ENCODE measurements at regions of chr20 and their contacts with region 1.

Region 1: GRCh38 chr20:50713657-50714101 is 17.7 kb upstream of the PARD6B start:
- DNase-seq: peak; percentile 35
- ATAC-seq: peak; percentile 73
- H3K4me3 Mint-ChIP-seq: no peak overlapping the region
- H3K27ac Mint-ChIP-seq: peak overlapping the region; percentile 55; the same call in 1 of the 2 replicates
- H3K4me1 Mint-ChIP-seq: peaks cover 37% of the 10 kb centered on the region
- H3K27me3 Mint-ChIP-seq: no peaks in the 10 kb centered on the region; the same call in none of the 2 replicates
- CTCF ChIP-seq: no peak

Region 2: GRCh38 chr20:50292324-50293243 is 421.1 kb before region 1 on chr20:
- CTCF ChIA-PET with region 1: no interaction called
- POLR2A ChIA-PET with region 1: no interaction called
- DNase-seq: peak; percentile 30
- ATAC-seq: no peak; the same call in 1 of the 2 replicates
- H3K4me3 Mint-ChIP-seq: no peak overlapping the region
- H3K27ac Mint-ChIP-seq: no peak overlapping the region
- H3K4me1 Mint-ChIP-seq: no peaks in the 10 kb centered on the region
- H3K27me3 Mint-ChIP-seq: no peaks in the 10 kb centered on the region
- CTCF ChIP-seq: no peak

Region 3: GRCh38 chr20:50635667-50636503 is 77.8 kb before region 1 on chr20:
- CTCF ChIA-PET with region 1: interaction called, 25 read pairs
- POLR2A ChIA-PET with region 1: no interaction called
- DNase-seq: peak; percentile 93
- ATAC-seq: peak; percentile 78
- H3K4me3 Mint-ChIP-seq: peak overlapping the region; percentile 42
- H3K27ac Mint-ChIP-seq: peak overlapping the region; percentile 86
- H3K4me1 Mint-ChIP-seq: peaks cover 53% of the 10 kb centered on the region
- H3K27me3 Mint-ChIP-seq: no peaks in the 10 kb centered on the region
- CTCF ChIP-seq: peak; percentile 88

Region 4: DNA sequence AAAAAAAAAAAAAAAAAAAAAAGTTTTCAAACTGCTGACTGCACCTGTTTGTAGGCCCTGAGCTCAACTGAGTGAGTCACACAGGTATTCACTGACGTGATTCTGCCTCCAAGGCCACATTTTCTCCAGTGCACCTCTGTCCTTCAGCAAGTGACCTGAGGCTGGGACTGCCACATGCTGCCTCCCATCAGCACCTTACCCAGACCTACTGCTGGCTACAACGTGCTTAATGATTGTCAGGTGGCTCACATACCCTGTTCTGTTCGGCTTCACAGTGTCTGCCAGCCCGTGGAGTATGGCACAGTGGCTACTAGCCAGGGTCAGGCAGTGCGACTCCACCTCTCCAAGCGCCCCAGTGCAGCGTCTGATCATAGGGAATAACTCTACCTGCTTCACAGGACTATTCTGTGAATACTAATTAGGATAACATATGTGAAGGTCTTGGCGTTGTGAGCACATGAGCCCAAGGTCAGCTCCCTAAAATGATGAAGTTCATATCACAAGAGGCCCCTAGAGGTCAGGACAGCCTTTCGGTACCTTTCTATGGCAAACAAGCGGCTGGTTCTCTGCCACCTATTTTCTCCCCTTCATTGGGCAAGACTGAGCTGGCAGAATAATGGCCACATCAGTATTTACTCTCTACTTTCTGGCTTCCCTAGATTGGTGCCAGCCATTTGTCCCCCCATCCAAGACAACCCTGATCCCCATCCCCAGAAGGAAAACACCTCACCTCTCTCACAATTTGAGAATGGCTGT is 50.4 kb before region 1 on chr20:
- CTCF ChIA-PET with region 1: interaction called, 60 read pairs
- POLR2A ChIA-PET with region 1: no interaction called
- DNase-seq: no peak
- ATAC-seq: peak; percentile 68
- H3K4me3 Mint-ChIP-seq: no peak overlapping the region
- H3K27ac Mint-ChIP-seq: peak overlapping the region; percentile 38; the same call in 1 of the 2 replicates
- H3K4me1 Mint-ChIP-seq: peaks cover 34% of the 10 kb centered on the region
- H3K27me3 Mint-ChIP-seq: no peaks in the 10 kb centered on the region
- CTCF ChIP-seq: no peak

Region 5: GRCh38 chr20:50668326-50668725 is 45.4 kb before region 1 on chr20:
- CTCF ChIA-PET with region 1: interaction called, 60 read pairs
- POLR2A ChIA-PET with region 1: no interaction called
- DNase-seq: no peak
- ATAC-seq: no peak
- H3K4me3 Mint-ChIP-seq: no peak overlapping the region
- H3K27ac Mint-ChIP-seq: 0 out of 2 replicates have a peak overlapping the region, but pooled peaks have one; percentile 11
- H3K4me1 Mint-ChIP-seq: peaks cover 24% of the 10 kb centered on the region
- H3K27me3 Mint-ChIP-seq: no peaks in the 10 kb centered on the region; the same call in 1 of the 2 replicates
- CTCF ChIP-seq: no peak

Region 6: GRCh38 chr20:50690634-50691572 is 22.8 kb before region 1 on chr20 and contains the start of gene RIPOR3:
- CTCF ChIA-PET with region 1: interaction called, 23 read pairs
- POLR2A ChIA-PET with region 1: no interaction called
- DNase-seq: peak; percentile 49
- ATAC-seq: peak; percentile 46
- H3K4me3 Mint-ChIP-seq: peak within 1 kb of the TSS; percentile 78
- H3K27ac Mint-ChIP-seq: peak within 1 kb of the TSS; percentile 94
- H3K4me1 Mint-ChIP-seq: peaks cover 53% of the 10 kb centered on the region
- H3K27me3 Mint-ChIP-seq: no peaks in the 10 kb centered on the region
- CTCF ChIP-seq: no peak
- total RNA-seq, gene RIPOR3: 5.4 to 6.5 TPM (median 6.0 TPM) in 3 replicates

Region 7: GRCh38 chr20:50731055-50731871 is 17.6 kb after region 1 on chr20 and contains the start of gene PARD6B:
- CTCF ChIA-PET with region 1: interaction called, 11 read pairs
- POLR2A ChIA-PET with region 1: interaction called, 3 read pairs
- DNase-seq: peak; percentile 99
- ATAC-seq: peak; percentile 95
- H3K4me3 Mint-ChIP-seq: peak within 1 kb of the TSS; percentile 79
- H3K27ac Mint-ChIP-seq: peak within 1 kb of the TSS; percentile 95
- H3K4me1 Mint-ChIP-seq: peaks cover 40% of the 10 kb centered on the region
- H3K27me3 Mint-ChIP-seq: no peaks in the 10 kb centered on the region
- CTCF ChIP-seq: no peak
- total RNA-seq, gene PARD6B: 29.6 to 38.0 TPM (median 37.5 TPM) in 3 replicates

Region 8: GRCh38 chr20:50744143-50744792 is 30.6 kb after region 1 on chr20:
- CTCF ChIA-PET with region 1: interaction called, 12 read pairs
- POLR2A ChIA-PET with region 1: no interaction called
- DNase-seq: no peak
- ATAC-seq: peak; percentile 69
- H3K4me3 Mint-ChIP-seq: no peak overlapping the region
- H3K27ac Mint-ChIP-seq: peak overlapping the region; percentile 97
- H3K4me1 Mint-ChIP-seq: peaks cover 61% of the 10 kb centered on the region
- H3K27me3 Mint-ChIP-seq: no peaks in the 10 kb centered on the region
- CTCF ChIP-seq: no peak

Measured in WTC11 (cell line).